Ascending aorta (tissue), 2 donors: ENCODE measurements at regions of chr11 and their contacts with region 1.

Region 1: GRCh38 chr11:56841210-56841810 is 92.8 kb upstream of the OR9G4 start:
- DNase-seq: no peak
- H3K4me3 ChIP-seq: no peak overlapping the region
- H3K27ac ChIP-seq: no peak overlapping the region
- H3K4me1 ChIP-seq: no peaks in the 10 kb centered on the region
- H3K27me3 ChIP-seq: no peaks in the 10 kb centered on the region
- CTCF ChIP-seq: peak; percentile 37 to 62 (median 45)

Region 2: DNA sequence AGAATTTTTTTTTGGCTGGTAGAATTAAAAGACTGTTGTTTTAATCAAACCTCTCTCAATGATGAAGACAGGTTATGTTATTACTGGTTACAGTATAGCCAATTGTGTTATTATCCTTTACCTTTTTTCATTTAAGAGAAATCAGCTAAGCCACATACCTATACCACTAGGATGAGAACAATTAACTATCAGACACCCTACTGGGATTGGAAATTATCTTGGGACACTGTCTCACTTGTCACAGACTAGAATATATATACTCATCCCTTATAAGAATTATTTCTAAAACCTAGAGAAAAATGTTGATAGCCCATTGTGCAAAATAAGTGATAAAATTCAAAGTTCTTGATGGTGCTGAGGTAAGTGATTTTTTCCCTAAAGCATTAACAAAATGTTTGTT is 814.0 kb before region 1 on chr11 and contains the start of gene OR5AS1:
- intact Hi-C with region 1: no loop called
- DNase-seq: no peak
- H3K4me3 ChIP-seq: no peak within 1 kb of the TSS
- H3K27ac ChIP-seq: no peak within 1 kb of the TSS
- H3K4me1 ChIP-seq: no peaks in the 10 kb centered on the region
- H3K27me3 ChIP-seq: no peaks in the 10 kb centered on the region
- CTCF ChIP-seq: no peak
- total RNA-seq, gene OR5AS1: not detected

Region 3: GRCh38 chr11:57249384-57250319 is 408.3 kb after region 1 on chr11:
- intact Hi-C with region 1: loop called (anchors 1 kb)
- DNase-seq: no peak
- H3K4me3 ChIP-seq: no peak overlapping the region
- H3K27ac ChIP-seq: no peak overlapping the region
- H3K4me1 ChIP-seq: no peaks in the 10 kb centered on the region
- H3K27me3 ChIP-seq: no peaks in the 10 kb centered on the region
- CTCF ChIP-seq: peak; percentile 58 to 77 (median 76)

Region 4: GRCh38 chr11:57277845-57278709 is 436.8 kb after region 1 on chr11:
- intact Hi-C with region 1: loop called (anchors 1 kb)
- DNase-seq: peak in 1 of 2 donors; percentile 81
- H3K4me3 ChIP-seq: peak overlapping the region in 1 of 2 donors; percentile 16
- H3K27ac ChIP-seq: no peak overlapping the region
- H3K4me1 ChIP-seq: no peaks in the 10 kb centered on the region
- H3K27me3 ChIP-seq: no peaks in the 10 kb centered on the region
- CTCF ChIP-seq: peak; percentile 52 to 75 (median 75)

Region 5: GRCh38 chr11:57345555-57346211 is 504.4 kb after region 1 on chr11:
- intact Hi-C with region 1: loop called (anchors 5 kb)
- DNase-seq: peak in 1 of 2 donors; percentile 82
- H3K4me3 ChIP-seq: no peak overlapping the region
- H3K27ac ChIP-seq: no peak overlapping the region
- H3K4me1 ChIP-seq: no peaks in the 10 kb centered on the region
- H3K27me3 ChIP-seq: no peaks in the 10 kb centered on the region
- CTCF ChIP-seq: peak; percentile 49 to 79 (median 64)